Activated CD4-positive, alpha-beta memory T cell treated with anti-CD3 and anti-CD28 coated beads, Interleukin-2, amount 10 ng/mL, durations not matched to agents 7 days and 5 days (primary cell): ENCODE measurements at regions of chr3 and their contacts with region 1.

Region 1: GRCh38 chr3:186806089-186807055 is at the start of gene RFC4:
- DNase-seq: peak; percentile 87
- H3K4me3 Mint-ChIP-seq: peak within 1 kb of the TSS; percentile 97
- H3K27ac Mint-ChIP-seq: peak within 1 kb of the TSS; percentile 94
- H3K4me1 Mint-ChIP-seq: peaks cover 45% of the 10 kb centered on the region
- H3K27me3 Mint-ChIP-seq: no peaks in the 10 kb centered on the region
- total RNA-seq, gene RFC4: 85.5 to 89.3 TPM

Region 2: DNA sequence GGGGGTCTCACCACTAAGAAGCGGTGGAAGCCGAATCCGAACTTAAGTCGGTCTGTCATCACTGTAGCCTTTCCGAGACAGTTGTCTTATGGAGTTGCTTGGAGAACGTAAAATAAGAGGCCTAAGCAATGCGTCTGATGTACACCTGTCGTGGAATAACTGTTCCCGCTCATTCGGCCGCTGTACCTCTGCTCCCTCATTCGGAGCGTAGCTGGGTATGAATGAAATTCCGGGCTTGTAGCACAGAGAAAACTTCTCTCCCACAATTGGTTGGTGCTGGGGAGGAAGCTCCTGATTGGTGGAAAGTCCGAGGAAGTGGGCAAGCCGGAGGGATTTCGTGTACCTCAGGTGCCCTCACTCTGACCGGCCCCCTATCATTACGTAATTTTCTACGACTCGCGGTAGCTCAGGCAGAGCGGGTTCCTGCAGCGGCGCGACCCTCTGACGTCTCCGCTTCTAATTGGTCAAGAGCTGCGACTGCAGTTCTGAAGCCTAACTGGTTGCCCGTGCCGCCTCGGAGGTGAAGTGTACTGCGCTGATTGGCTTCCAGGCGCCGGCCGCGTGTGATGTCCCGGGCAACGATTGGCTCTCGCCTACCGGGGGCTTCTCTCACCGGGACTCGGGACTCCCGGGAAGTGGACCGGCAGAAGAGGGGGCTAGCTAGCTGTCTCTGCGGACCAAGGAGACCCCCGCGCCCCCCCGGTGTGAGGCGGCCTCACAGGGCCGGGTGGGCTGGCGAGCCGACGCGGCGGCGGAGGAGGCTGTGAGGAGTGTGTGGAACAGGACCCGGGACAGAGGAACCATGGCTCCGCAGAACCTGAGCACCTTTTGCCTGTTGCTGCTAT is 236.1 kb before region 1 on chr3 and contains the start of gene DNAJB11:
- CTCF ChIA-PET with region 1: no interaction called
- POLR2A ChIA-PET with region 1: interaction called, 21 read pairs
- DNase-seq: peak; percentile 99
- H3K4me3 Mint-ChIP-seq: peak within 1 kb of the TSS; percentile 96
- H3K27ac Mint-ChIP-seq: peak within 1 kb of the TSS; percentile 92
- H3K4me1 Mint-ChIP-seq: peaks cover 62% of the 10 kb centered on the region
- H3K27me3 Mint-ChIP-seq: no peaks in the 10 kb centered on the region
- total RNA-seq, gene DNAJB11: 50.7 to 55.7 TPM

Region 3: GRCh38 chr3:186772701-186773424 is 33.5 kb before region 1 on chr3:
- CTCF ChIA-PET with region 1: interaction called, 3 read pairs
- POLR2A ChIA-PET with region 1: interaction called, 17 read pairs
- DNase-seq: peak; percentile 74
- H3K4me3 Mint-ChIP-seq: peak overlapping the region; percentile 77
- H3K27ac Mint-ChIP-seq: peak overlapping the region; percentile 77
- H3K4me1 Mint-ChIP-seq: peaks cover 16% of the 10 kb centered on the region
- H3K27me3 Mint-ChIP-seq: no peaks in the 10 kb centered on the region

Region 4: GRCh38 chr3:186790261-186790981 is 16.0 kb before region 1 on chr3:
- CTCF ChIA-PET with region 1: interaction called, 3 read pairs
- POLR2A ChIA-PET with region 1: interaction called, 232 read pairs
- DNase-seq: no peak
- H3K4me3 Mint-ChIP-seq: no peak overlapping the region
- H3K27ac Mint-ChIP-seq: peak overlapping the region; percentile 22
- H3K4me1 Mint-ChIP-seq: peaks cover 48% of the 10 kb centered on the region
- H3K27me3 Mint-ChIP-seq: no peaks in the 10 kb centered on the region

Region 5: DNA sequence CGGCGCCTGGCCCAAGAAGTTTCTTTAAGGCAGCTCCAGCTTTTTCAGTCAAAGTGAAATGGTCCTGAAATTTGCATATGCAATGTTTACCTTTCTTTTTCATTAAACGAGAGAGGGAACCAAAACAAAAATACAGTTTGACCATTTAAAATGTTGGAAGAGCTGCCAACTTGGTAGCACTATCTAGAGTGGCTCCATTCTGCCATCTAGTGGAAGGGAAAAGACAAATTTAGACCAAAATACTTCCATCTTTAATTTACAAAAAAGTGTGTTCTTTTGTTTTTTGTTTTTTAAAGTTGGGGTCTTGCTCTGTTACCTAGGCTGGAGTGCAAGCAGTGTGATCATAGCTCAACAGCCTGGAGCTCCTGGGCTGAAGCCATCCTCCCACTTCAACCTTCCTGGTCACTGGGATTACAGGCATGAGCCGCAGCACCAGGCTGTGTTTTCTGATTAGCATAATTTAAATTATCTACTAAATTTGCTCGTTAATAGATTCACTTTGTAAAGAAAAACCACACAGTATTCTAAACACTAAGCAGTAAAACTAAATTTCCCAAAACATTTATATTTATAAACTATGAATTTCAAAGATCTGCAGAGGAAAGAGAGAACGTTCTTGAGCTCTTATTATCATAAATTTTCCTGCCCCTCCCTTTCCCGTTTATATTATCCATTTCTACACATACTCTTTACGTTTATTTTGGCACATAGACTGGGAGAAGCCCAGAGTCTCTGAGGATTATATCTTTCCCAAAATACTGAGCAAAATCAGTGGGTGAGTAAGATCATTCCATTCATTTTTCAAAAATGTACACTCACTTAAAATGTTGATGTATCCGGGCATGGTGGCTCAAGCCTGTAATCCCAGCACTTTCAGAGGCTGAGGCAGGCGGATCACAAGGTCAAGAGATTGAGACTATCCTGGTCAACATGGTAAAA is 15.3 kb after region 1 on chr3:
- CTCF ChIA-PET with region 1: interaction called, 11 read pairs
- POLR2A ChIA-PET with region 1: interaction called, 16 read pairs
- DNase-seq: no peak
- H3K4me3 Mint-ChIP-seq: no peak overlapping the region
- H3K27ac Mint-ChIP-seq: no peak overlapping the region
- H3K4me1 Mint-ChIP-seq: peaks cover 22% of the 10 kb centered on the region
- H3K27me3 Mint-ChIP-seq: no peaks in the 10 kb centered on the region

Region 6: DNA sequence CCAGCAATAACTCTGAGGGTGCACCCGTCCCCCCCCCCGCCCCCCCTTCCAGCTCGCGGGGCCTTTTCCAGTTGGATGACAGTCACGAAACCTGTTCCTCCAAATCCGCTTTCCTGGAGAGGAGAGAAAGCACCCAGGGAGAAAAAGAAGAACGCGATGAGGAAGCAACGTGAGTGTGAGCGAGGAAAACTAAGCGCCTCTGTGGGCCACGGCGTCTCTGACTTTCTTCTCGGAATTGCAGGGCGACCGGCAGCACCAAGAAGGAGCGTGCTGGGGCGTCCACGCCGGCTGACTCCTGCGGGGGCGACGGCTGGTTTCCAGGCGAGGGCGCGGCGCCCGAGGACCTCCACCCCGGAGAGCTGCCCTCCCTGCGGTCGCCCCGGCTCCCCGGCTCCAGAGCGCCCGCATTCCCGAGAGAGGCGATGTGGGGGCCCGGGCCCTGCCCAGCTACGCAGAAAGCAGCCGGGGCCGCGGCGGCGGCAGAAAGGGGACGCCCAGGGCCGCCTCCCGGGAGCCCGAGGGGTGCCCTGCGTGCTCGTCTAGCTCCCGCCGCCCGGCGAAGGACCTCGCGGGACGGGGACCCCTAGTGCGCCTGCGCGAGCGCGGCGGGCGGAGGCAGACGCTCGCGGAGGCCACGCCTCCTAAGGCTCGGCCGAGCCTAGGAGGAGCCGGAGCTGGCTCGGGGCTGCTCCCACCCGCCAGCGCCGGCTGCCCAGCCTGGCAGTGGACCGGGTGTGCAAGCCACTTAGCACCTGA is 20.8 kb after region 1 on chr3:
- CTCF ChIA-PET with region 1: interaction called, 11 read pairs
- POLR2A ChIA-PET with region 1: interaction called, 16 read pairs
- DNase-seq: peak; percentile 89
- H3K4me3 Mint-ChIP-seq: peak overlapping the region; percentile 75
- H3K27ac Mint-ChIP-seq: peak overlapping the region; percentile 57
- H3K4me1 Mint-ChIP-seq: peaks cover 27% of the 10 kb centered on the region
- H3K27me3 Mint-ChIP-seq: peaks cover 39% of the 10 kb centered on the region

Region 7: DNA sequence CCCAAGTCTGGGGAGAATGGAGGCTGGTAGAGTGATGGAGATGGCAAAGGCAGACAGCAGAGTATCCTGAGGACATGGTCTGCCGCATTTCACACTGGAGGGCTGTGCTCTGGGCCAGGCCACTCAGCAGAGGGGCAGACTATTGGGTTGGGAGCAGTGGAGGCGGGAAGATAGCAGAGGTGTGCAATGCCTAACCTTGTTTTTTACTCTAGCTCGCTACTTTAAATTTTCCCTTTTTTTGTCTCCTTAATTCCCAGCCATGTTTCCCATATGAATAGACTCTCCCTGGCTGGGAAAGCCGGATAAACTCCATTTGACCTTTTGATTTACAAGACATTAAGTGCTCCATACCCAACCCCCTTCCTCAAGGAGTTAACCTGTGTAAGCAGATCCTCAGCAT is 90.5 kb after region 1 on chr3:
- CTCF ChIA-PET with region 1: no interaction called
- POLR2A ChIA-PET with region 1: no interaction called
- DNase-seq: no peak
- H3K4me3 Mint-ChIP-seq: no peak overlapping the region
- H3K27ac Mint-ChIP-seq: no peak overlapping the region
- H3K4me1 Mint-ChIP-seq: peaks cover 17% of the 10 kb centered on the region
- H3K27me3 Mint-ChIP-seq: no peaks in the 10 kb centered on the region